Left ventricle myocardium superior (tissue), 1 donor: ENCODE measurements at regions of chr10 and their contacts with region 1.

Region 1: GRCh38 chr10:11270135-11270857 is 252.6 kb downstream of the CELF2 start:
- DNase-seq: peak; percentile 89
- ATAC-seq: peak; percentile 96

Region 2: DNA sequence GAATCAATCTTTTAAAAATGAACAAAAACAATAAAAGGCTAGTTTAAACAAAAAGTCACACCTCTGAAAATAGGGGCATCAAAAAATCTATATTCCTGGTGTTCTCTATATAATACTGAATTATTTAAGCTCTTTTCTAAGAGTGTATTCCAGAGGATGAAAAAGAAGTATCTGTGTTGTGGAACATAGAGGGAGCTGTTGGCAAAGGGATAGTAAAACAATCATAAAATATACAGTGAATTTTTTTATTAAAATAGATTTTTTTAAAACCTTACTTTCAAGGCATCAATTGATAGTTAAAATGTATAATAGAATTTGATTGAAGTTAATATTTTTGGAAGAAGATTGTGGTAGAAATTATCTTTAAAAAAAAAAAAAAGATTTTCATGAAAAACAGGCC is 1661.7 kb before region 1 on chr10:
- intact Hi-C with region 1: loop called (anchors 10 kb)
- DNase-seq: no peak
- ATAC-seq: no peak

Region 3: DNA sequence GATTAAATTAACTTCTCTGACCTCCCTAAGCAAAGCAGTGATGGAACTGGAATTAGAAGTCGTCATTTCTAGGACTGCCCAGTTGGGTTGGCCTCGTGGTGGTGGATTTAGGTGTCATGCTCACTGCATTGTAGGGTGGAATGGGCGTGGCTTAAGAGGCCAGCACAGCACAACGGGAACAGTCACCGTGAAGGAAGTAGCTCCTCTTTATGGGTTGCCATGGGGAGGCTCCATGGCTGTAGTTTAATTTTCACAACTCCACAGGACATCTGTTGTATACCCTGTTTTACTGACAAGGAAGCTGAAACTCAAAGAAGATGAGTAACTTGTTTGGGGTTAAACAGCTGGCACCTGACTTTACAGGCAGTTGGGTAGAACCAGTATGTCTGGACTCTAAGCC is 44.4 kb before region 1 on chr10:
- intact Hi-C with region 1: no loop called
- DNase-seq: peak; percentile 46
- ATAC-seq: peak; percentile 46